ENCODE measurements at regions of chr16 and their contacts with region 1.

Region 1: DNA sequence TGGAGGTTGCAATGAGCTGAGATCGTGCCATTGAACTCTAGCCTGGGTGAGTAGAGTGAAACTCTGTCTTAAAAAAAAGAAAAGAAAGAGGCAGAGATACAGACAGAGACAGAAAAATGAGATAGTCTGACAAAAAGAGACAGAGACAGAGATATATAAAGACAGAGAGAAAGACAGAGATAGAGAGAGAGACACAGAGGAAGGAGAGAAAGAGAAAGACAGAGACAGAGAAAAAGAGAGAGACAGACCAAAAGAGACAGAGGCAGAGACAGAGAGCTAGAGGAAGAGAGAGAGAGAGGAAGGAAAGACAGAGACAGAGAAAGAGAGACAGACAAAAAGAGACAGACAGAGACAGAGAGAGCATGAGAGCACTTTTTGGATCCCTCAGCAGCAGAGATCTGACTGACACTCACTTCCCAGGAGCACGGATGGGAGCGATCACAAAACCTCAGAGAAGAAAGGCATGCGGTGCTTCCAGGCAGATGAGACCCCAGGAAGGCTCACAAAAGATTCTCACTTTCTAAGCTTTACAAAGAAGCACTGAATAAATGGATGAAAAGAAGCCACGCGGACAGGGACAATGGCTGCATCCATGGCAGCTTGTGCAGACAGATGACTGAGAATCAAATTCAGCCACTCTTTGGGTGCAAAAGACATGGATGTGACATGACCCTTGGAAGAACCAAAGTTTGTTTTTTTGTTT is 38.6 kb upstream of the HS3ST2 start:
- DNase-seq: no peak
- H3K4me3 ChIP-seq: no peak overlapping the region
- H3K27ac ChIP-seq: no peak overlapping the region
- H3K4me1 ChIP-seq: peaks cover 12% of the 10 kb centered on the region
- H3K27me3 ChIP-seq: no peaks in the 10 kb centered on the region
- CTCF ChIP-seq: no peak

Region 2: GRCh38 chr16:22705799-22706198 is 69.6 kb before region 1 on chr16:
- CTCF ChIA-PET with region 1: no interaction called
- dilution Hi-C with region 1: loop called (anchors 5 kb)
- in situ Hi-C with region 1: no loop called
- intact Hi-C with region 1: no loop called
- DNase-seq: no peak
- H3K4me3 ChIP-seq: no peak overlapping the region
- H3K27ac ChIP-seq: no peak overlapping the region
- H3K4me1 ChIP-seq: no peaks in the 10 kb centered on the region
- H3K27me3 ChIP-seq: no peaks in the 10 kb centered on the region
- CTCF ChIP-seq: no peak

Region 3: DNA sequence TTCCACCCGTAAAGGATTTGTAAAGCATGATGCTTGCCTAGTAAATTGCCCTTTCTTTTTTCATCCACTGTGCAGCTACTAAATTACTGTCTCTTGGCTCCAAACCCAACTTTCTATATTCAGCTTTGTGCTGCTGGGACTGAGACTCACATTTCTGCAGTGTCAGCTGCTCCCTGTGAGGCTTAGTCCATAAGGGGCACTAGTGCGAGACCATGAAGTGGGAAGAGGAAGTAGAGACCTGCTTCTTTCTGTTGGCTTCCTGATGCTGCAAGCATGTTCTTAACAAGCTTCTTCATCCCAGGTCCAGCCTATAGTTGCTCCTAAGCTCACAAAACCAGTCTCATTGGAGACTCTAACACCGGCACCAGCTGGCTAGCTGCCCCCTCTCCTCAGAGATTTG is 36.3 kb before region 1 on chr16:
- CTCF ChIA-PET with region 1: no interaction called
- dilution Hi-C with region 1: no loop called
- in situ Hi-C with region 1: no loop called
- intact Hi-C with region 1: no loop called
- DNase-seq: no peak
- H3K4me3 ChIP-seq: no peak overlapping the region
- H3K27ac ChIP-seq: no peak overlapping the region
- H3K4me1 ChIP-seq: no peaks in the 10 kb centered on the region
- H3K27me3 ChIP-seq: no peaks in the 10 kb centered on the region
- CTCF ChIP-seq: no peak

Region 4: GRCh38 chr16:23006380-23006779 is 231.0 kb after region 1 on chr16:
- CTCF ChIA-PET with region 1: no interaction called
- dilution Hi-C with region 1: no loop called
- in situ Hi-C with region 1: no loop called
- intact Hi-C with region 1: no loop called
- DNase-seq: no peak
- H3K4me3 ChIP-seq: no peak overlapping the region
- H3K27ac ChIP-seq: no peak overlapping the region
- H3K4me1 ChIP-seq: peaks cover 4% of the 10 kb centered on the region
- H3K27me3 ChIP-seq: no peaks in the 10 kb centered on the region
- CTCF ChIP-seq: no peak

Measured in mammary epithelial cell (primary cell).